GM12878 (cell line): ENCODE measurements at regions of chr21 and their contacts with region 1.

Region 1: DNA sequence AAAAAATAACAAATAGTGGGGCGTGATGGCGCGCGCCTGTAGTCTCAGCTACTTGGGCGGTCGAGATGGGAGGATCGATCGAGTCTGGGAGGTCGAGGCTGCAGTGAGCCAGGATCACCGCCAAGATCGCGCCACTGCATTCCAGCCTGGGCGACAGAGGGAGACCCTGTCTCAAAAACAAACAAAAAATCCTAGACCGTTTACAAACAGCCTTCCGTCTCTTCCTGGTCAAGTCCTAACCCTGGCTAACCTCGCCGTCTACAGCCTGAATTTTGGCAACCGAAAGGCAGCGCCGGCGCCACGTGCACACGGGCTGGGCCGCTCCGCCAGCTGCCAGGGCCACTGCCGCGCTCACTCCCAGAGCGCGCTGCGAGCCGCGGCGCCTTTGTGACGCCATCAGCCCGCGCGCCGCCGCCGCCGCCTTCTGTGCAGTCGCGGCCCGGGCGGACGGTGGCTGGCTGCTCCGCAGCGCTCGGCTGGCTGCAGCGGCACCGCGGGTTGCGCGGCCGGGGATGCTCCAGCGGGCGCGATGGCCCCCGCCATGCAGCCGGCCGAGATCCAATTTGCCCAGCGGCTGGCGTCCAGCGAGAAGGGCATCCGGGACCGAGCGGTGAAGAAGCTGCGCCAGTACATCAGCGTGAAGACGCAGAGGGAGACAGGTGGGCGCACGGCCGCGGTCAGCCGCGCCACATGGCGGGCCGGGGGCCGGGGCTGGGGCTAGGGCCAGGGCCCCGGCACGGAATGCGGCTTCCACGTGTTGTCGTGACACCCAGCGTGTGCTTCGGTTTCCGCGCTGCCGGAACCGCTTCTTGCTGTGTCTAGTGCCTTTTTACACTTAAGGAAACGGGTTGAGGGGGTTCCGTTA is at the starts of genes HSF2BP and RRP1B:
- DNase-seq: no peak
- ATAC-seq: peak; percentile 93
- H3K4me3 ChIP-seq: peak within 1 kb of the TSS; percentile 77
- H3K27ac ChIP-seq: peak within 1 kb of the TSS; percentile 89
- H3K4me1 ChIP-seq: peaks cover 27% of the 10 kb centered on the region
- H3K27me3 ChIP-seq: no peaks in the 10 kb centered on the region
- CTCF ChIP-seq: no peak
- EP300 ChIP-seq: 0 out of 4 replicates have a peak, but pooled peaks of 1 of the 2 experiments have one; percentile 11
- POLR2A ChIP-seq: peak; percentile 92
- RAD21 ChIP-seq: no peak
- polyA plus RNA-seq, gene HSF2BP: 0.07 to 0.19 TPM
- polyA plus RNA-seq, gene RRP1B: 8.1 to 9.7 TPM

Region 2: GRCh38 chr21:42923541-42924432 is 735.6 kb before region 1 on chr21:
- CTCF ChIA-PET with region 1: no interaction called
- POLR2A ChIA-PET with region 1: no interaction called
- RAD21 ChIA-PET with region 1: no interaction called
- SMC1A ChIA-PET with region 1: interaction called, 3 read pairs
- in situ Hi-C with region 1: no loop called
- intact Hi-C with region 1: loop called (anchors 10 kb)
- DNase-seq: peak; percentile 70
- ATAC-seq: peak; percentile 99
- H3K4me3 ChIP-seq: peak overlapping the region; percentile 15; the same call in 1 of the 2 replicates
- H3K27ac ChIP-seq: peak overlapping the region; percentile 49
- H3K4me1 ChIP-seq: peaks cover 6% of the 10 kb centered on the region
- H3K27me3 ChIP-seq: no peaks in the 10 kb centered on the region
- CTCF ChIP-seq: peak; percentile 76 to 83 (median 81)
- EP300 ChIP-seq: peak in 1 of 2 experiments; percentile 37; a peak in 1 of 4 replicates
- POLR2A ChIP-seq: peak; percentile 60
- RAD21 ChIP-seq: peak; percentile 97

Region 3: DNA sequence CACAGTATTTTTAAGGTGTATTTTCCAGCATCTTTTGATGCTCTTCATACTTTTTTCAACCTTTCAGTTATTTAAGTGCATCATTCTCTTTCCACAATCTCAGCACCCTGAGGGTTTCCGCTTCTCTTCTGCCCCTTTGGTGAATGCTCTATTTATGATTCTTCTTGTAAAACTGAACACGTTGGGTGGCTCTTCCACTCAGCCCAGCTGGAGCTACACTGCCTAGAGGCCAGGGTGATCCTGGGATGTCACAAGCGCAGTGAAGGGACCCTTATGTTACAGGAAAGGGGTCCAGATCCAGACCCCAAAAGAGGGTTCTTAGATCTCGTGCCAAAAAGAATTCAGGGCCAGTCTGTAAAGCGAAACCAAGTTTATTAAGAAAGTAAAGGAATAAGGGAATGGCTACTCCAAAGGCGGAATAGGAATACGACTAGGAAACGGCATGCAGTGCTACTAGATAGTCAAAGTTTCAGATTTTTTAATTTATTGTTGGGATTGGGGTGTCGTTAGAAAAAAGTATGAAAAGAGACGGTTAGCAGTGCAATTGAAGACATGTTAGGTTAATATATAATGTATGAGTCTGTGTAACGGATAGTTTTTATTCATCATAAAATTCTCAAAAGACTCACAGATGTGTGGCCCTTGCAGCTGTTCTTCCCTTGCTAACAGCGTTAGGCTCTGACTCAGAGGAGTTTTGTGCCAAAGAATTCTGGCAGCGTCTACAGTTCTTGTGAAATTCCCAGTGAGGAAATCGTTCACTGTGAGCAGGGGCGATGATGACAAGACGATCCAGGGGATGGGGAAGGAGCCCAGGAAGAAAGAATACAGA is 719.6 kb before region 1 on chr21:
- CTCF ChIA-PET with region 1: no interaction called
- POLR2A ChIA-PET with region 1: no interaction called
- RAD21 ChIA-PET with region 1: no interaction called
- SMC1A ChIA-PET with region 1: no interaction called
- in situ Hi-C with region 1: loop called (anchors 10 kb)
- intact Hi-C with region 1: no loop called
- DNase-seq: no peak
- ATAC-seq: no peak
- H3K4me3 ChIP-seq: no peak overlapping the region
- H3K27ac ChIP-seq: no peak overlapping the region
- H3K4me1 ChIP-seq: peaks cover 11% of the 10 kb centered on the region
- H3K27me3 ChIP-seq: no peaks in the 10 kb centered on the region
- CTCF ChIP-seq: no peak
- EP300 ChIP-seq: no peak
- POLR2A ChIP-seq: no peak
- RAD21 ChIP-seq: no peak